ENCODE measurements at regions of chr10 and their contacts with region 1.

Region 1: GRCh38 chr10:105063796-105064195 is 422.7 kb downstream of the SORCS3 start:
- DNase-seq: no peak
- ATAC-seq: no peak
- H3K4me3 ChIP-seq: no peak overlapping the region
- H3K27ac ChIP-seq: no peak overlapping the region
- H3K4me1 ChIP-seq: no peaks in the 10 kb centered on the region
- H3K27me3 ChIP-seq: no peaks in the 10 kb centered on the region
- CTCF ChIP-seq: no peak
- POLR2A ChIP-seq: no peak

Region 2: GRCh38 chr10:104424719-104425118 is 639.1 kb before region 1 on chr10:
- in situ Hi-C with region 1: no loop called
- intact Hi-C with region 1: no loop called
- DNase-seq: no peak
- ATAC-seq: no peak
- H3K4me3 ChIP-seq: no peak overlapping the region
- H3K27ac ChIP-seq: no peak overlapping the region
- H3K4me1 ChIP-seq: peaks cover 0 to 3% of the 10 kb centered on the region in 2 donors
- H3K27me3 ChIP-seq: no peaks in the 10 kb centered on the region
- CTCF ChIP-seq: no peak
- POLR2A ChIP-seq: no peak

Region 3: DNA sequence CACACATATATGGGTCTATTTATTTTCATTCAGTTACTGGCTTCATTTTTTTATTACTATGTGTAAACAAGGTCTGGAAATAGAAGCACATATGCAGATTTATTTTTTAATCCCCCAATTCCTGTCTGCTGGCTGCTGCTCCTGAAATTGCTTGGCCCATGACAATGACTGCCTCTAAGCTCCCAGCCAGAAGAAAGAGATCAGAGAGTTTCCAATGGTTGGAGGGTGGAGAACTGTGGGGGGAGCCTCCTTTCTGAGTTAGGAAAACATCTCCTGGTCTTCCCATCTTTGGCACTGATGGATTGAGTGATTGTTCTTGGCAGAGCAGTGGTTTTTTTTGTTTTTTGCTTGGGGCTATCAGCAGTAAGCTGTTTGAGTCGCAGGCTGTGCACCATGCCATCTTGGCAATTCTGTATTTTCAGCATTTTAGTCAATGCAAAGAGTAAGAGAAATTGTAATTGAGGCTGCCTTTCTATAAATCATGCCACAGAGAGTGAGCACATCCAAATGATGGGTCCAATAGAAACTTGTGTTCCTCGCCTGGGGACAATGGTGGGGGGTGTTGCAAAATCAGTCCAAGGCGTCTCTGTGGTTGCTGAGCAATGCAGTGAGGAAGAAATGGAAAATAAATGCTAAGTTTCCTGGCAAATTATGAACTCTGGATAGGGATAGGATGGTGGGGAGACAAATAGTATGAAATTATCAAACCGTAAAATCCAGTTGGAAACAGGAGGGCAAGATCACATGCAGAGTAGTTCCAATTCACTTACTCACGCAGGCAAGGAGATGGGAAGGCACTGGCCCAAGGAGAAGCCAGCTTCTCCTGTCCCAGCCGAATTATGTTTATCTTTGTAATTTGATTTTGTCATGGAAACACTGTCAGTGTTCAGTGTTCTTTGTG is 40.3 kb before region 1 on chr10:
- in situ Hi-C with region 1: no loop called
- intact Hi-C with region 1: no loop called
- DNase-seq: no peak
- ATAC-seq: peak in 1 of 2 donors; percentile 30
- H3K4me3 ChIP-seq: no peak overlapping the region
- H3K27ac ChIP-seq: no peak overlapping the region
- H3K4me1 ChIP-seq: no peaks in the 10 kb centered on the region
- H3K27me3 ChIP-seq: no peaks in the 10 kb centered on the region
- CTCF ChIP-seq: no peak
- POLR2A ChIP-seq: no peak

Region 4: DNA sequence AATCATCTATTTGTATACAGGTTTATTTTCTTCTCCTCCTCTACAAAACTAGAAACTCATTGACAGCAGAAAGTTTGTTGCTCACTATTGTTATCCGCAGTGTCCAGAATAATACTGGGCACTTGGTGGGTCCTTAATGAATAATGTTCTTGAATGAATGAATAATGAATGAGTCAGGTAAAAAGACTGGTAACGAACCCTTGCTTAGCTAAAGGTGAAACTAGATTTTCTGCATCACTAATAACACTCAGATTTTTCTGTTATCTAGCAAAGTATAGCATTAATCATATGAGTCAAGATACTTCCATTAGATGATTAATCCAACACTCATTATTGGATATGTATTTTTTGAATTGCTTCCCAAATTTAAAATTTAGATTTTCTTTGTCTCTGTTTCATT is 530.5 kb after region 1 on chr10:
- in situ Hi-C with region 1: no loop called
- intact Hi-C with region 1: loop called (anchors 5 kb)
- DNase-seq: no peak
- ATAC-seq: no peak
- H3K4me3 ChIP-seq: no peak overlapping the region
- H3K27ac ChIP-seq: no peak overlapping the region
- H3K4me1 ChIP-seq: no peaks in the 10 kb centered on the region
- H3K27me3 ChIP-seq: no peaks in the 10 kb centered on the region
- CTCF ChIP-seq: no peak
- POLR2A ChIP-seq: no peak